Activated T-helper 2 cell treated with anti-CD3 and anti-CD28 coated beads, Interferon-gamma antibody, Interleukin-2, Interleukin-4, amounts not matched to agents 10 μg/mL and 5 μg/mL and 100 μg/mL, durations not matched to agents 14 hours and 24 hours and 36 hours (primary cell): ENCODE measurements at regions of chr20 and their contacts with region 1.

Region 1: GRCh38 chr20:16761305-16761829 is 13.2 kb downstream of the OTOR start:
- DNase-seq: peak; percentile 26
- H3K4me3 Mint-ChIP-seq: no peak overlapping the region
- H3K27ac Mint-ChIP-seq: no peak overlapping the region
- H3K4me1 Mint-ChIP-seq: peaks cover 8% of the 10 kb centered on the region
- H3K27me3 Mint-ChIP-seq: peaks cover 33% of the 10 kb centered on the region

Region 2: DNA sequence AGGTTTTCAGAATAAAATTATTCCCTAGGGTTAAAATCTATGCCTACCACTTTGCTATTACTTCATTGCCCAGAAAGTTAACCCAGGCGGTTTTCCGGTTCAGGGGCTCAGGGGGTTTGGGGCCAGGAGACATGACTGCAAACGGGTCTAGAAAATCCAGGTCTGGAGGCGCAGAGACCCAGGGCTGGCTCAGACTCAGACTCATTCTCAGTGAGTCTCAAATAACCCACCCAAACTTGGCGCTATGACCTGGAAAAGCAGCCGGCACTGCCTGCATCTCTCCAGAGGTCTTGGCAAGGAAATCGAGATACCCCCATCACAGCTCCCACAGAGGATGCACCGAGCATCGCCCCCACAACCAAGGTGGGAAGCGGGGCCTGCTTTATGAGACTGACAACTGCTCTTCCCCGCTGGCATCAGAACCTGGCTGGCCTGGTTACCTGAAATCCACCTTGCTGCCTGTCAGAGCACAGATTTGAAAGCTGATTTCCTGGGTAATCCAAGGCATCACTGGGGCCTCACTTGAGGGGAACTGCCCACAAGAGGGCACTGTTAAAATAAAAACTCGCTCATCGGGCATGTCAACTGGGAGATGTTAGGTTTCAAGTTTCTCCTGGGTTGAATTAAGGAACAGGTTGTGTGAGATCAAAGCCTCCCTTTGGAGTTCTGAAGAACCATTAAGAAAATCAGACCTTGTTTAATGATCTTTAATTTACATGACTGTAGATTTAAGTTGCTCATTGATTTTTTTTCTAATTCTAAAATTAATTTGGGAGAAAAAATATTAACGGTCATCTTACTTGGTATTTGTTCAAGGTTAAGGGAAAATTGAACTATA is 243.2 kb before region 1 on chr20:
- intact Hi-C with region 1: loop called (anchors 2 kb)
- DNase-seq: no peak
- H3K4me3 Mint-ChIP-seq: no peak overlapping the region
- H3K27ac Mint-ChIP-seq: no peak overlapping the region
- H3K4me1 Mint-ChIP-seq: peaks cover 2% of the 10 kb centered on the region
- H3K27me3 Mint-ChIP-seq: no peaks in the 10 kb centered on the region

Region 3: GRCh38 chr20:16701296-16701695 is 60.1 kb before region 1 on chr20:
- intact Hi-C with region 1: loop called (anchors 2 kb)
- DNase-seq: peak; percentile 19
- H3K4me3 Mint-ChIP-seq: no peak overlapping the region
- H3K27ac Mint-ChIP-seq: no peak overlapping the region
- H3K4me1 Mint-ChIP-seq: no peaks in the 10 kb centered on the region
- H3K27me3 Mint-ChIP-seq: peaks cover 33% of the 10 kb centered on the region